HepG2 (cell line): ENCODE measurements at regions of chr3 and their contacts with region 1.

Region 1: GRCh38 chr3:128170805-128171516 is 17.7 kb downstream of the EEFSEC start:
- DNase-seq: peak; percentile 91
- ATAC-seq: peak; percentile 67
- H3K4me3 ChIP-seq: no peak overlapping the region
- H3K27ac ChIP-seq: peak overlapping the region; percentile 99
- H3K4me1 ChIP-seq: peaks cover 77% of the 10 kb centered on the region
- H3K27me3 ChIP-seq: no peaks in the 10 kb centered on the region
- CTCF ChIP-seq: peak; percentile 95
- EP300 ChIP-seq: peak in 1 of 2 experiments; percentile 52; a peak in 2 of 4 replicates
- POLR2A ChIP-seq: no peak
- RAD21 ChIP-seq: peak; percentile 91

Region 2: GRCh38 chr3:128123538-128124368 is 47.2 kb before region 1 on chr3 and contains the start of gene RUVBL1:
- CTCF ChIA-PET with region 1: no interaction called
- POLR2A ChIA-PET with region 1: interaction called, 19 read pairs
- in situ Hi-C with region 1: no loop called
- intact Hi-C with region 1: no loop called
- DNase-seq: peak; percentile 94
- ATAC-seq: peak; percentile 99
- H3K4me3 ChIP-seq: peak within 1 kb of the TSS; percentile 93 to 97 (median 97)
- H3K27ac ChIP-seq: peak within 1 kb of the TSS; percentile 87
- H3K4me1 ChIP-seq: peaks cover 38% of the 10 kb centered on the region
- H3K27me3 ChIP-seq: no peaks in the 10 kb centered on the region
- CTCF ChIP-seq: no peak
- EP300 ChIP-seq: peak in 1 of 2 experiments; percentile 32; a peak in 1 of 4 replicates
- POLR2A ChIP-seq: peak; percentile 62 to 70; a peak in 3 of 4 replicates
- RAD21 ChIP-seq: no peak
- total RNA-seq, gene RUVBL1: 86.3 and 120 TPM in 2 replicates

Region 3: DNA sequence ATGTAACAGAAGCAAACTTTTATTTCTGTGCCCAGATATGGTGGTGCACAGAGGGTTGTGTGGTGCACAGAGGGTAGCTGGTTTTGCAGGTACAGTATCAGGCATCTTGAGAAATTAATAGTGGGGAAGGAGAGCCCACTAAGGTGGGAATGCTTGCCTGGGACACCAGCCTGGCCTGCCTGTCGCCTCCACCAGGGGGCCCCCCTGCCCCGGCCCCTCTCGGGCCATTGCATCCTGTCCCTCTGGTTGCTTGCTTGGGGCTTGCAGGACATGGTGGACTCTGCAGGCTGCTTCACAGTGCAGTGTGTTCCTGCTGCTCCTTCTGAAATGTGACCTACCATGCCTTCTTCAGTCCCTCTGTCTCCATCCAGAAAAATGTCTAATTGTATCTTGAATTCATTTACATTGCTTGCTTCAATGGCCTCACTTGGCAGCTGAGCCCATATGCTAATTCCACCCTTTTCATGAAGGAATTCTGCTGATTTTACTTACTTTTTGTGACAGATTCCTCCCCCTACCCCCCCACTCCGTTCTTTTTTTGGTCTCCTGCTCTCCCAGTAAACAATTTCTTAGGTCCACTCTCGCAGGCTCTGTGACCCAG is 55.9 kb after region 1 on chr3:
- CTCF ChIA-PET with region 1: interaction called, 3 read pairs
- POLR2A ChIA-PET with region 1: no interaction called
- in situ Hi-C with region 1: no loop called
- intact Hi-C with region 1: loop called (anchors 5 kb)
- DNase-seq: peak; percentile 31
- ATAC-seq: peak; percentile 95
- H3K4me3 ChIP-seq: no peak overlapping the region
- H3K27ac ChIP-seq: no peak overlapping the region
- H3K4me1 ChIP-seq: peaks cover 8% of the 10 kb centered on the region
- H3K27me3 ChIP-seq: no peaks in the 10 kb centered on the region
- CTCF ChIP-seq: peak; percentile 72
- EP300 ChIP-seq: no peak
- POLR2A ChIP-seq: no peak
- RAD21 ChIP-seq: peak; percentile 55; the same call in 1 of the 2 replicates

Region 4: DNA sequence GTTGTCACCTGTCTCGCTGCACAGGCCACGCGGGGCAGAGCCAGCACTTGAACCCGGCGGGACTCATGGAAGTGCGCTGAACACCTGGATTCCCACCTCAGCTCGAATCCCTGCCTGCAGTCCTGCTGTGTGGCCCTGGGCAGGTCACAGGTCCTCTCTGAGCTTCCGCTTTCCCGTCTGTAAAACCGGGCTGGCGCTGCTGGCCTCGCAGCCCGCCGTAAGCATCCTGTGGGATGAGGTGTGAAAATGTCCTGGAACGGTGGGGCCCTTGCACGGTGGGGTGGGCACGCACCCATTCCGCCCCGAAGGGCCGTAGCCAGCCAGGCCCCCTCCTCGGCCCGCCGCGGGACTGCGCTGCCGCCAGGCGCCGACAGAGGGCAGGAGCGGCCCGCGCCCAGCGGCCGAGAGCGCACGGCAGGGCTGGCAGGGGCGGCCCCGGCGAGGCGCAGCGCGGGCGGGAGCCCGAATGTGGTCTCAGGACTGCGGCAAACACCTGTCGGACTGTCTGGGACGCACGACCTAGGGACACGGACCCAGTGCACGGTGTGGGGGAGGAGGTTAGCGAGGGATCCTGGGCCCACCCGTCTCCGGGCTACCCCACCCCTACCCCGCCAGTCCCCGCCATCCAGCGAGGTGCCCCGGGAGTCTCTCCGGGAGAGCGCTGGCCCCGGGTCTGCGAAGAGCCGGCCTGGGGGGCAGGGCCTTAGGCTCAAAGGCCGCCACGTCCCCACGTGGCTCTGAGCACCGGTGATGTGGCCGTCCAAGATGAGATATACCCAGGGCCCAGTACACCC is 255.4 kb after region 1 on chr3:
- CTCF ChIA-PET with region 1: no interaction called
- POLR2A ChIA-PET with region 1: no interaction called
- in situ Hi-C with region 1: no loop called
- intact Hi-C with region 1: loop called (anchors 5 kb)
- DNase-seq: peak; percentile 35
- ATAC-seq: peak; percentile 84
- H3K4me3 ChIP-seq: peak overlapping the region in 2 of 3 experiments; percentile 40 to 65; a peak in 3 of 6 replicates
- H3K27ac ChIP-seq: no peak overlapping the region
- H3K4me1 ChIP-seq: peaks cover 21% of the 10 kb centered on the region
- H3K27me3 ChIP-seq: peaks cover 9 to 35% of the 10 kb centered on the region in 2 experiments
- CTCF ChIP-seq: peak; percentile 78
- EP300 ChIP-seq: no peak
- POLR2A ChIP-seq: peak in 1 of 2 experiments; percentile 40; a peak in 1 of 4 replicates
- RAD21 ChIP-seq: peak; percentile 97

Region 5: GRCh38 chr3:128497387-128498126 is 326.6 kb after region 1 on chr3:
- CTCF ChIA-PET with region 1: interaction called, 10 read pairs
- POLR2A ChIA-PET with region 1: no interaction called
- in situ Hi-C with region 1: loop called (anchors 5 kb)
- intact Hi-C with region 1: loop called (anchors 1 kb)
- DNase-seq: no peak
- ATAC-seq: peak; percentile 42
- H3K4me3 ChIP-seq: no peak overlapping the region
- H3K27ac ChIP-seq: no peak overlapping the region
- H3K4me1 ChIP-seq: peaks cover 14% of the 10 kb centered on the region
- H3K27me3 ChIP-seq: no peaks in the 10 kb centered on the region
- CTCF ChIP-seq: peak; percentile 71
- EP300 ChIP-seq: no peak
- POLR2A ChIP-seq: no peak
- RAD21 ChIP-seq: peak; percentile 61; the same call in 1 of the 2 replicates